ENCODE measurements at regions of chr6 and their contacts with region 1.

Region 1: DNA sequence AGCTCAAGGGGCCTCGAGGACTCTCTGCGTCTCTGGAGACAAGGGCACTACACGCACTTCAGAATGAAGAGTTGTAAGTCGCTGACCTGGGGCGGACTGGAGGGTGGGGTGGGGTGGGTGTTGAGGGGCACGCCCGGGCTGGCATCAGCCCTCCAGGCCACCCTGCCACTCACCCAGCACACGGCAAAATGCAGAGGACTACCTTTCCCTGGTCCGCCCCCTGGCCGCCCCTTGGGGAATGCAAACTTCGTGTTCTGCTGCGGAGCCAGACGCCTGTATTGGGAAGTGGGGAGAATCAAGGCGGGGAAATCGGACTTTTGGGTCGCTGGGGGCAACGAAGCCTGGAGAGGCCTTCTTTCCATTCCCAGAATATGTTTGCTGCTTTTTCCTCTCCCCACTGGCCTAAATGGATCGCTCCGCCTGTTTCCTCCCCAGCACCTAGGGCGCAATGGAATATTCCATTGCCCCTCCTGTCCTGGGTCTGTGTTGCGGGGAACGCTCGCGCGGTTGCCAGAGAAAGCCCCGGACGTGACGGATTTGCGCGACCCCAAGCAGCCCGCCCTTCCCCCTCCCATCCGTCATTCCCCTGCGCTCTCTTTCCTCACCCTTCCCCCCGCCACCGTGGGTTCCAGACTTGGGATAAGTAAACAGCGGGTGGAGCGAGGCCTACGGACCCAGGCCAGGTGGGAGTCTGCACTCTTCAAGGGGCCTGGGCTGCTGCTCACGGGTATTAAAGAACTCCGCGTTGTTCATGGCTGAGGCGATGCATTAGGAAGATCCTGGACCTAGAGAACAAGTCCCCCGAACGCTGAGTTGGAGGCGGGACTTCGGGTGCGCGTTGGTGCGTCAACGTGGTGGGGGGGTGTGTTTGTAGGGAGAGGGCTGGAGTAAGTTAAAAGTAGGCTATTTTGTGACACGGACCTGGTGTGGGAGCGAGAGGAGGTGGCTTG is at the start of gene PPT2:
- DNase-seq: peak; percentile 65
- ATAC-seq: peak; percentile 32
- H3K4me3 ChIP-seq: peak within 1 kb of the TSS; percentile 59 to 75 (median 68)
- H3K4me3 Mint-ChIP-seq: peak within 1 kb of the TSS; percentile 99
- H3K27ac ChIP-seq: no peak within 1 kb of the TSS
- H3K27ac Mint-ChIP-seq: peak within 1 kb of the TSS; percentile 58
- H3K4me1 ChIP-seq: peaks cover 27 to 34% of the 10 kb centered on the region in 2 donors
- H3K4me1 Mint-ChIP-seq: peaks cover 48% of the 10 kb centered on the region
- H3K27me3 ChIP-seq: peaks cover 0 to 54% (median 19%) of the 10 kb centered on the region in 4 experiments
- H3K27me3 Mint-ChIP-seq: peaks cover 35% of the 10 kb centered on the region
- CTCF ChIP-seq: no peak
- total RNA-seq, gene PPT2: 2.7 and 4.2 TPM in 2 replicates

Region 2: GRCh38 chr6:31465718-31466117 is 688.1 kb before region 1 on chr6:
- CTCF ChIA-PET with region 1: no interaction called
- POLR2A ChIA-PET with region 1: no interaction called
- intact Hi-C with region 1: no loop called
- DNase-seq: peak; percentile 35
- ATAC-seq: no peak
- H3K4me3 ChIP-seq: peak overlapping the region in 3 of 5 experiments; percentile 73 to 98 (median 81)
- H3K4me3 Mint-ChIP-seq: peak overlapping the region; percentile 99
- H3K27ac ChIP-seq: peak overlapping the region in 1 of 2 donors; percentile 99
- H3K27ac Mint-ChIP-seq: peak overlapping the region; percentile 60
- H3K4me1 ChIP-seq: peaks cover 73 to 79% of the 10 kb centered on the region in 2 donors
- H3K4me1 Mint-ChIP-seq: peaks cover 91% of the 10 kb centered on the region
- H3K27me3 ChIP-seq: no peaks in the 10 kb centered on the region
- H3K27me3 Mint-ChIP-seq: no peaks in the 10 kb centered on the region
- CTCF ChIP-seq: no peak

Region 3: GRCh38 chr6:31619805-31620585 is 533.8 kb before region 1 on chr6:
- CTCF ChIA-PET with region 1: no interaction called
- POLR2A ChIA-PET with region 1: no interaction called
- intact Hi-C with region 1: no loop called
- DNase-seq: peak; percentile 99
- ATAC-seq: peak; percentile 84
- H3K4me3 ChIP-seq: peak overlapping the region; percentile 8 to 90 (median 84)
- H3K4me3 Mint-ChIP-seq: peak overlapping the region; percentile 86
- H3K27ac ChIP-seq: peak overlapping the region; percentile 97 to 99
- H3K27ac Mint-ChIP-seq: peak overlapping the region; percentile 95
- H3K4me1 ChIP-seq: peaks cover 26 to 35% of the 10 kb centered on the region in 2 donors
- H3K4me1 Mint-ChIP-seq: peaks cover 45% of the 10 kb centered on the region
- H3K27me3 ChIP-seq: no peaks in the 10 kb centered on the region
- H3K27me3 Mint-ChIP-seq: no peaks in the 10 kb centered on the region
- CTCF ChIP-seq: no peak

Region 4: DNA sequence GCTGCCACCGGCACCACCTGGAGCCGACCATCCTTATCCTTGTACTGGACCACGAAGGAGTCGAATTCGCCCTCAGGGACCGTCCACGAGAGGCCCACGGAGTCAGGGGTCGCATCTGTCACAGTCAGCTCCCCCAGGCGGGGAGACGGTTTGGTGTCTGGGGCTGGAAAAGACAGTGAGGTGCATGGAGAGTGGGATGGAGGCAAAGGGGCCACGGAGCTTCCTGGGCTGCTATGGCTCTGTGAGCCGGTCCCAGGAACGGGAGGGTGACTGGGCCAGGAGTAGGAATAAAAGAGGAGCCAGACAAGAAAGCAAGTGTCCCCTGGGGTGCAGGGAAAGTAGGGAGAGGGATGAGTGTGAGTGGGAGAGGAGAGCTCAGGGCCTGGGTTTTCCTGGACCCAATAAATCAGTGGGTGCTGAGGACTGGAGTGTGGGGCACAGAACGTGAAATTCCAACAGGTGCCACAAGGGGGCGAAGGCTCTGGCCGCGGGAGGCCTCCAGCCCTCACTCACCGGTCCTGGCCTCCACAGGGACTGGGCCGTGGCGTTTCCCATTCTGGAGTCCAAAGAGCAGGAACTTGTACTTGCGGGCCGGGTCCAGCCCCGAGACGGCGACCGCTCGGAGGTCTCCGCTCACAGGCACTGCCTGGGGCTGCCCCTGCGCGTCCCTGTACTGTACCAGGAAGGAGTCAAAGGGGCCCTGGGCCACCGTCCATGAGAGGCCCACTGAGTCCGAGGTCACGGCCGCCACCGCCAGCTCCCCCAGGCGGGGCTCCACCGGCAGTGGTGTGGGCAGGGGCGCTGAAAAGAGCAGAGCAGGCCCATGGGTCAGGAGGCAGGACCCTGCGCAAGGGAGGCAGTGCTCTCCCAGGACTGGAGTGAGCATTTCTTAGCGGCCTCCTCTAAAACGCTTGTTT is 105.7 kb before region 1 on chr6:
- CTCF ChIA-PET with region 1: interaction called, 3 read pairs
- POLR2A ChIA-PET with region 1: no interaction called
- intact Hi-C with region 1: loop called (anchors 10 kb)
- DNase-seq: peak; percentile 80
- ATAC-seq: peak; percentile 84
- H3K4me3 ChIP-seq: no peak overlapping the region
- H3K4me3 Mint-ChIP-seq: no peak overlapping the region
- H3K27ac ChIP-seq: no peak overlapping the region
- H3K27ac Mint-ChIP-seq: no peak overlapping the region
- H3K4me1 ChIP-seq: peaks cover 0 to 4% of the 10 kb centered on the region in 2 donors
- H3K4me1 Mint-ChIP-seq: peaks cover 5% of the 10 kb centered on the region
- H3K27me3 ChIP-seq: no peaks in the 10 kb centered on the region
- H3K27me3 Mint-ChIP-seq: peaks cover 16% of the 10 kb centered on the region
- CTCF ChIP-seq: peak; percentile 93

Region 5: GRCh38 chr6:32087574-32088486 is 66.0 kb before region 1 on chr6:
- CTCF ChIA-PET with region 1: no interaction called
- POLR2A ChIA-PET with region 1: no interaction called
- intact Hi-C with region 1: loop called (anchors 1 kb)
- DNase-seq: peak; percentile 78
- ATAC-seq: peak; percentile 89
- H3K4me3 ChIP-seq: no peak overlapping the region
- H3K4me3 Mint-ChIP-seq: peak overlapping the region; percentile 27
- H3K27ac ChIP-seq: no peak overlapping the region
- H3K27ac Mint-ChIP-seq: no peak overlapping the region
- H3K4me1 ChIP-seq: peaks cover 8% of the 10 kb centered on the region in 2 donors
- H3K4me1 Mint-ChIP-seq: peaks cover 10% of the 10 kb centered on the region
- H3K27me3 ChIP-seq: peaks cover 0 to 35% (median 18%) of the 10 kb centered on the region in 4 experiments
- H3K27me3 Mint-ChIP-seq: peaks cover 57% of the 10 kb centered on the region
- CTCF ChIP-seq: peak; percentile 52

Region 6: GRCh38 chr6:32118782-32119628 is 34.8 kb before region 1 on chr6:
- CTCF ChIA-PET with region 1: interaction called, 11 read pairs
- POLR2A ChIA-PET with region 1: no interaction called
- intact Hi-C with region 1: loop called (anchors 1 kb)
- DNase-seq: peak; percentile 77
- ATAC-seq: peak; percentile 85
- H3K4me3 ChIP-seq: no peak overlapping the region
- H3K4me3 Mint-ChIP-seq: no peak overlapping the region
- H3K27ac ChIP-seq: no peak overlapping the region
- H3K27ac Mint-ChIP-seq: no peak overlapping the region
- H3K4me1 ChIP-seq: peaks cover 0 to 3% of the 10 kb centered on the region in 2 donors
- H3K4me1 Mint-ChIP-seq: peaks cover 7% of the 10 kb centered on the region
- H3K27me3 ChIP-seq: no peaks in the 10 kb centered on the region
- H3K27me3 Mint-ChIP-seq: no peaks in the 10 kb centered on the region
- CTCF ChIP-seq: peak; percentile 95

Region 7: DNA sequence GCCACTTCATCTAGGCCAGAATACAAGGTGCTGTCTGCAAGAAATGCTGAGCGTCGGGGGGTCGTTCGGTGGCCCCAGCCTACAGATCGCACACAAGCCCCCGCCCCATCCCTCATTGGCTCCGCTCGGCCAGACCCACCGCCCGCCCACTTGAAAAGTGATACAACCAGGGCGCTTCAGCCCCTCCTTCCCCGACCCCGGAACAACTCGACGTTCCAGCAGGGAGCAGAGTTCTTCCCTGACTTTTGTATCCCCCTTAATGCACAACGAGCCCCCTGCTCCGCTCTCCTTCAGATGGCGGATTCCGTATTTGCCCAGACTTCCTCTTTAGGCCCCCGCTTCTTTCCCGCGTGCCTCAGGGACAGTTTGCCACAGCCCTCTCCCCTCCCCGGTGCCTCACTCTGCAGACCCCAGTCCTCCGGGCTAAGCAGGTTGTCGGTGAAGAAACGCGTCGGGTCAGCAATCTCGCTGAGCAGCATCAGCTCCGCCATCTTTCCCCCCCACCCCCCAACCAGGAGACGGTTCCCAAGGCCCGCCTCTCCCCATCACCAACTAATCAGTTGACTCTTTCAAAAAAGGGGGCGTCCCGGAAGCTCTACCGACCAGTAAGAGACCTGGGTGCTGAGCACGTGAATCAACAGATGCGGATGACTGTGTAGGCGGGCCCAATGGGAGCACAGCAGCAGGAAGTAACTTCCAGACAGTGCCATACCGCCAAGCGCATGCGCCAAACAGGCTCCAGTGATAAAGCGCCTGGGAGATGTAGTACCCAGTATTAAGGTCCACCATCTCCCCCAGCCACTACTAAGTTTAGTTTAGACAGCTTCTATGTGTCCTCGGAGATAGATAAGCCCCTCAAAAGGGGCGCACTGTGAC is 25.9 kb before region 1 on chr6 and contains the start of gene ATF6B:
- CTCF ChIA-PET with region 1: interaction called, 7 read pairs
- POLR2A ChIA-PET with region 1: interaction called, 8 read pairs
- intact Hi-C with region 1: loop called (anchors 1 kb)
- DNase-seq: peak; percentile 98
- ATAC-seq: peak; percentile 92
- H3K4me3 ChIP-seq: peak within 1 kb of the TSS; percentile 82 to 100 (median 99)
- H3K4me3 Mint-ChIP-seq: peak within 1 kb of the TSS; percentile 98
- H3K27ac ChIP-seq: peak within 1 kb of the TSS; percentile 62 to 91
- H3K27ac Mint-ChIP-seq: peak within 1 kb of the TSS; percentile 95
- H3K4me1 ChIP-seq: peaks cover 26 to 36% of the 10 kb centered on the region in 2 donors
- H3K4me1 Mint-ChIP-seq: peaks cover 48% of the 10 kb centered on the region
- H3K27me3 ChIP-seq: no peaks in the 10 kb centered on the region
- H3K27me3 Mint-ChIP-seq: no peaks in the 10 kb centered on the region
- CTCF ChIP-seq: no peak
- total RNA-seq, gene ATF6B: 201 and 206 TPM in 2 replicates

Region 8: DNA sequence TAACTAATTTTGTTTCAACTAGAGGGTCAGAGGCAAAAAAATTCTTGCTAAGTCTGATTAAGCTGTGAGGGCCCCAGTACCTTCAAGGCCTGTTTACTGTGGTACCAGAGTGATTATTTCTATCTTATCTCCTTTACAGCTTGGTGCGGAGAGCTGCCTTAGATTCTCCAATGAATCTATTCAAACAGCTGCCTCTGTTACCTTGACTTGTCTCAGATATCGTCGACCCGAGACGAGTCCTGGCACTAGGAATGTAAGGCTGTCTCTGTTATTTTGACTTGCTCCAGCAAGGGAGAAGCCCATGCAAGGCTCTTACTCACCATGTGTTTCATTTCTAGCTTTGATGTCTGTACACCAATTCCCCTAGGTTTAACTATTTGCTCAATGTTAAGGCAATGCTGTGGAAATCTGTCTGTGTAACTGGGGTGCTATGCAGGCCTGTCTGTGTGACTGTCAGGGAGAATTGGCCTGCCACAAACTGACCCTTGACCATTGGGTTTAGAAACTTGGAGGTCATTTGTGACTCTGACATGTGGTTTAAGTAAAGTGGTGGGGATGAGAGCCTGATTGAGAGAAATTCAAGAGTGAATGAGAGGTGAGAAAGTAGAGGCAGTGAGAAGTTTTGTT is 13.3 kb before region 1 on chr6:
- CTCF ChIA-PET with region 1: no interaction called
- POLR2A ChIA-PET with region 1: no interaction called
- intact Hi-C with region 1: no loop called
- DNase-seq: no peak
- ATAC-seq: no peak
- H3K4me3 ChIP-seq: no peak overlapping the region
- H3K4me3 Mint-ChIP-seq: no peak overlapping the region
- H3K27ac ChIP-seq: no peak overlapping the region
- H3K27ac Mint-ChIP-seq: no peak overlapping the region
- H3K4me1 ChIP-seq: no peaks in the 10 kb centered on the region
- H3K4me1 Mint-ChIP-seq: no peaks in the 10 kb centered on the region
- H3K27me3 ChIP-seq: peaks cover 0 to 5% (median 2%) of the 10 kb centered on the region in 4 experiments
- H3K27me3 Mint-ChIP-seq: peaks cover 12% of the 10 kb centered on the region
- CTCF ChIP-seq: no peak

Region 9: GRCh38 chr6:32166411-32167061 is 12.7 kb after region 1 on chr6:
- CTCF ChIA-PET with region 1: no interaction called
- POLR2A ChIA-PET with region 1: no interaction called
- intact Hi-C with region 1: no loop called
- DNase-seq: peak; percentile 18
- ATAC-seq: no peak
- H3K4me3 ChIP-seq: no peak overlapping the region
- H3K4me3 Mint-ChIP-seq: no peak overlapping the region
- H3K27ac ChIP-seq: no peak overlapping the region
- H3K27ac Mint-ChIP-seq: no peak overlapping the region
- H3K4me1 ChIP-seq: peaks cover 0 to 6% of the 10 kb centered on the region in 2 donors
- H3K4me1 Mint-ChIP-seq: peaks cover 8% of the 10 kb centered on the region
- H3K27me3 ChIP-seq: no peaks in the 10 kb centered on the region
- H3K27me3 Mint-ChIP-seq: no peaks in the 10 kb centered on the region
- CTCF ChIP-seq: no peak

Region 10: DNA sequence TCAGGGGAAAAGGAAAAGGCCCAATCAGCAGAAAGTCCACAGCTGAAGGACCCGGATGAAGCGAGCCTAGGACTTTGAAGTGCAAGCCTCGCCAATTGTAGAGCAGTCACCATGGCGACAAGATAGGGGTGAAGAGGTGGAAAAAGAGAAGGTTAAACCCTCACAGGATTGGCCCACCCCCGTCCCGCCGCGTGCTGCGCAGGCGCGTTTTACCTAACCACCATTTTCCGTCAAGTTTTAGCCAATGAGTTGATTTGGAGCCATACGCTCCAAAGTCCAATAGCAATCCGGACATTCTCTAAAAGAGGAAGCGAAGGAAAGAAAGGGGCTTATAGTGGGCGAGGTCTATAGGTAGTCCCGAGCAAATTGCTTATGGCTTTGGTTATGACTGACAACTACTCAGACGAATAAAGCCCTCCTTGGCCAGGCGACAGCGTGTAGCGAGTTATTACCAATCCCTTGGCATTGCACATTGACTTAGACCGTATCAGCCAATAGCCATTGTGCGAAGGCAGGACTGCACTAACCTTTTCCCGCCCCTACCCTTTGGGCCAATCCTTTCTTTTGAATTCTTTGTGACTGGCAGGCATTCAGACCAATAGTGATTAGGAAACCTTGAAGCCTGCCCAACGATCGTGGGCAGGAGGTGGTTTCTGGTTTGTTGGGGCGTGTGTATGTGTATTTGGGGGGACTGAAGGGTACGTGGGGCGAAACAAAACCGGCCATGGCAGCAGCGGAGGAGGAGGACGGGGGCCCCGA is 24.1 kb after region 1 on chr6 and contains the start of gene RNF5:
- CTCF ChIA-PET with region 1: interaction called, 6 read pairs
- POLR2A ChIA-PET with region 1: interaction called, 3 read pairs
- intact Hi-C with region 1: loop called (anchors 1 kb)
- DNase-seq: peak; percentile 99
- ATAC-seq: peak; percentile 79
- H3K4me3 ChIP-seq: peak within 1 kb of the TSS; percentile 68 to 92 (median 75)
- H3K4me3 Mint-ChIP-seq: peak within 1 kb of the TSS; percentile 97
- H3K27ac ChIP-seq: peak within 1 kb of the TSS; percentile 97 to 98
- H3K27ac Mint-ChIP-seq: peak within 1 kb of the TSS; percentile 99
- H3K4me1 ChIP-seq: peaks cover 34 to 47% of the 10 kb centered on the region in 2 donors
- H3K4me1 Mint-ChIP-seq: peaks cover 68% of the 10 kb centered on the region
- H3K27me3 ChIP-seq: no peaks in the 10 kb centered on the region
- H3K27me3 Mint-ChIP-seq: no peaks in the 10 kb centered on the region
- CTCF ChIP-seq: no peak
- total RNA-seq, gene RNF5: 39.0 and 40.7 TPM in 2 replicates

Measured in B cell (primary cell).